Activated naive CD8-positive, alpha-beta T cell treated with anti-CD3 and anti-CD28 coated beads, Interleukin-2, amount 10 ng/mL, durations not matched to agents 7 days and 5 days (primary cell): ENCODE measurements at regions of chr1 and their contacts with region 1.

Region 1: GRCh38 chr1:145927063-145927886 is at the start of gene RBM8A:
- DNase-seq: peak; percentile 83
- ATAC-seq: peak; percentile 96
- H3K4me3 Mint-ChIP-seq: no peak within 1 kb of the TSS
- H3K27ac Mint-ChIP-seq: peak within 1 kb of the TSS; percentile 93
- H3K4me1 Mint-ChIP-seq: peaks cover 17% of the 10 kb centered on the region
- H3K27me3 Mint-ChIP-seq: no peaks in the 10 kb centered on the region
- total RNA-seq, gene RBM8A: 157 to 160 TPM

Region 2: DNA sequence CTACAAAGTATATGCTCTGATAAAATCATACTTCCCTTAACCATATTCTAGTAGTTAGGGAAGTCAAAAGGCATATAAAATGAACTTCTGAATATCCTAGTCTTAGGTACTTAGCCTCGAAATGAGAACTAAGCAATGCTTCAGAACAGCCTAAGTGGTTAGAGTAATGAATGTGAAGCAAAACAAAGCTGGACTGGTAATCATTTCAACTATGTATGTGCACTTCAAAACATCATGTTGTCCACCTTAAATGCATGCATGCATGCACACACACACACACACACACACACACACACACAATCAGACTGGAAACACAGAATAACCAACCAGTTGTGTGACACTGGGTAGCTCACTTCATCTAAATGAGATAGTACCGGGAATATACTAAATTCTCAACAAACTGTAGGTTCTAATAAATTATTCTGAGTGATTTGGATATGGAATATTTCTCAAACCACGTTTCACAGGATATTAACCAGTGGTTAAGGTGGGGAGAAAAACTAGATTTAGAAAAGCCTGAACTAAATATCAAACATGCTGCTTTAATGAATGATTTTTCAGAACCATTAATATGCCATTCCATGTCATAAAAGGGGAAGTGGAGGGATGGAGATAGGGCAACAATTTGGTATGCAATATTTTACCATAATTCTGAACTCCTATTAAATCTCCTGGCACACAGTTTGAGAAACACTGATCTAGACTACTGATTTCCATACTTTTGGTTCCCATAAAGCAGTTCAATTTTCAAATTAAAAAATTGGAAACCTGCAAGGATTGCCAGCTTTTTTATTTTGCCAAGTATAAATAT is 122.8 kb before region 1 on chr1:
- POLR2A ChIA-PET with region 1: no interaction called
- DNase-seq: no peak
- ATAC-seq: no peak
- H3K4me3 Mint-ChIP-seq: no peak overlapping the region
- H3K27ac Mint-ChIP-seq: no peak overlapping the region
- H3K4me1 Mint-ChIP-seq: peaks cover 16% of the 10 kb centered on the region
- H3K27me3 Mint-ChIP-seq: no peaks in the 10 kb centered on the region

Region 3: DNA sequence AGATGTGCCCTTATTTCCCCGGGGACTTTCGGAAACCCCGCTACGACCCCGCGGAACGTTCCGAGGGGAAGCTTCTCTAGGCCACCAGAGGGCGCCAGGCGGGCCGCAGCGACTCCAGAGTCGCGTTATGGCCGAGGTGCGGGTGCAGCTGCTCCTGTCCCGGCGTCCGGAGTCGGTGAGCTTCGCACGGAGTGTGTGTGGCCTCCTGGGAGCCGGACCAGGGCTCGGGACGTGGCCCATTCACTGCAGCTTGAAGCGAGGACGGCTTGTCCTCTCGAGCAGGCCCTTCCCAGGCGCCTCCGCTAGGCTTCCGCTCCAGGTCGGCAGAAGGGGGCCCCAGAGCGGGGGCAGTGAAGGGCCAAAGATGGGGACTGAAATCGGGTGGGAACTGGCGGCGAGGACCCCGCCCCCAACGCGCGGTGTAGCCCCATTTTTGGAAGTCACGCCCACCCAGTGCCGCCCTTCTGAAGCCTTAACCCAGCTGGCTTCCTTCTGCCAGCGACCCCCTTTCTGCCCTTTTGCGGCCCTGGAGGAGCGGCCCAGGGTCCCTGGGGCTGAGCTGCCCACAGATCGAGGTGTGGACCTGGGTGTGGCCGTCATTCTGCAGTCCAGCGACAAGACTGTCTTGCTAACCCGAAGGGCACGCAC is 81.6 kb before region 1 on chr1 and contains the start of gene NUDT17:
- POLR2A ChIA-PET with region 1: interaction called, 10 read pairs
- DNase-seq: peak; percentile 85
- ATAC-seq: peak; percentile 77
- H3K4me3 Mint-ChIP-seq: no peak within 1 kb of the TSS
- H3K27ac Mint-ChIP-seq: no peak within 1 kb of the TSS
- H3K4me1 Mint-ChIP-seq: peaks cover 6% of the 10 kb centered on the region
- H3K27me3 Mint-ChIP-seq: no peaks in the 10 kb centered on the region
- total RNA-seq, gene NUDT17: 2.9 to 3.5 TPM

Region 4: GRCh38 chr1:145871994-145872924 is 55.0 kb before region 1 on chr1:
- POLR2A ChIA-PET with region 1: interaction called, 14 read pairs
- DNase-seq: peak; percentile 69
- ATAC-seq: peak; percentile 91
- H3K4me3 Mint-ChIP-seq: peak overlapping the region; percentile 83
- H3K27ac Mint-ChIP-seq: peak overlapping the region; percentile 84
- H3K4me1 Mint-ChIP-seq: peaks cover 14% of the 10 kb centered on the region
- H3K27me3 Mint-ChIP-seq: peaks cover 34% of the 10 kb centered on the region

Region 5: GRCh38 chr1:145957443-145958319 is 30.4 kb after region 1 on chr1 and contains the start of gene LIX1L:
- POLR2A ChIA-PET with region 1: interaction called, 76 read pairs
- DNase-seq: peak; percentile 89
- ATAC-seq: peak; percentile 90
- H3K4me3 Mint-ChIP-seq: peak within 1 kb of the TSS; percentile 99
- H3K27ac Mint-ChIP-seq: peak within 1 kb of the TSS; percentile 94
- H3K4me1 Mint-ChIP-seq: peaks cover 66% of the 10 kb centered on the region
- H3K27me3 Mint-ChIP-seq: no peaks in the 10 kb centered on the region
- total RNA-seq, gene LIX1L: 54.0 to 57.5 TPM

Region 6: GRCh38 chr1:145963995-145964901 is 37.0 kb after region 1 on chr1 and contains the starts of genes ANKRD34A and POLR3GL:
- POLR2A ChIA-PET with region 1: interaction called, 76 read pairs
- DNase-seq: peak; percentile 85
- ATAC-seq: peak; percentile 89
- H3K4me3 Mint-ChIP-seq: peak within 1 kb of the TSS; percentile 94
- H3K27ac Mint-ChIP-seq: peak within 1 kb of the TSS; percentile 94
- H3K4me1 Mint-ChIP-seq: peaks cover 39% of the 10 kb centered on the region
- H3K27me3 Mint-ChIP-seq: no peaks in the 10 kb centered on the region
- total RNA-seq, gene ANKRD34A: 2.2 to 2.8 TPM
- total RNA-seq, gene POLR3GL: 32.6 to 34.9 TPM